ENCODE measurements at regions of chr7 and their contacts with region 1.

Region 1: GRCh38 chr7:27242555-27243339 is at the start of gene EVX1:
- DNase-seq: no peak
- H3K4me3 Mint-ChIP-seq: no peak within 1 kb of the TSS
- H3K27ac Mint-ChIP-seq: peak within 1 kb of the TSS; percentile 35
- H3K4me1 Mint-ChIP-seq: peaks cover 1% of the 10 kb centered on the region
- H3K27me3 Mint-ChIP-seq: peaks cover 75% of the 10 kb centered on the region
- total RNA-seq, gene EVX1: not detected in 2 replicates

Region 2: GRCh38 chr7:25851332-25852210 is 1391.2 kb before region 1 on chr7:
- intact Hi-C with region 1: loop called (anchors 5 kb)
- DNase-seq: peak; percentile 63
- H3K4me3 Mint-ChIP-seq: peak overlapping the region; percentile 78
- H3K27ac Mint-ChIP-seq: peak overlapping the region; percentile 74
- H3K4me1 Mint-ChIP-seq: peaks cover 21% of the 10 kb centered on the region
- H3K27me3 Mint-ChIP-seq: peaks cover 43% of the 10 kb centered on the region

Region 3: DNA sequence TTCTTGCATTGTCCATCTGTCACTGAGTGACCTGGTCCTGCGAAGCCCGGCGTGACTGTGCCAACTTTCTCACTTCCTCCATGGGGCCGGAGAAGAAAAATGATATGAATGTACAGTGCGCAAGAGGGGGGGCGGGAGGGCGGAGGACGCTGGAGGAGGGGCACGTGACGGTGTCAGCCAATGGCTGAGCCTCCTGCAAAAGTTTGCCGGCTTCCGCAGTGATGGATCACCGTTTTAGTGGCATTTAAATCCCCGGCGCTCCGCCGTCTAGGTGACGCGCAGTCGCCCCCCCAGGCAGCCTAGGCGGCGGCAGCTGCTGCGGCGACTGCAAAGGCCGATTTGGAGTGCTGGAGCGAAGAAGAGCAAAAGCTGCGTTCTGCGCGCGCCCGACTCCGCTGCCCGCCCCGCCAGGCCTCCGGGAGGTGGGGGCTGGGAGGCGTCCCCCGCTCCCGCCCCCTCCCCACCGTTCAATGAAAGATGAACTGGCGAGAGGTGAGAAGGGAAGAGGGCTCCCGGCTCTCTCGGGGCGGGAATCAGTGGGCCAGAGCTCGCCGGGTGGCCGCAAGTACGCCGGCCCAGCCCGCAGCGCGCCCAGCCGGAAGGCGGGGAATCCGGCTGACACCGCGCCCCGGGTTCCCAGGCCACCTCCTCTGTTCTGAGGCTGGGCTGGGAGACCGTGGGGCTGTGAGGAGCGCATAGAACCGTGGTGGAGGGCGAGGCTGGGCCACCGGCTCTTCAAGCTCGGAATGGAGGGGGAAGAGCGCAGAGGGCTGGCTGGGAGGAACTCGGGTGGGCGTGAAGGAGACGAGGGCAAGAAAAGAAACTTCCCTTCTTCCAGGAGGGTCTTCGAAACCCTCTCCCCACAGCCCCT is 146.6 kb before region 1 on chr7 and contains the start of gene HOXA1:
- intact Hi-C with region 1: loop called (anchors 5 kb)
- DNase-seq: peak; percentile 66
- H3K4me3 Mint-ChIP-seq: peak within 1 kb of the TSS; percentile 80
- H3K27ac Mint-ChIP-seq: peak within 1 kb of the TSS; percentile 21
- H3K4me1 Mint-ChIP-seq: peaks cover 16% of the 10 kb centered on the region
- H3K27me3 Mint-ChIP-seq: peaks cover 83% of the 10 kb centered on the region
- total RNA-seq, gene HOXA1: 0.11 and 0.16 TPM in 2 replicates

Region 4: GRCh38 chr7:27166531-27167505 is 75.9 kb before region 1 on chr7:
- intact Hi-C with region 1: loop called (anchors 2 kb)
- DNase-seq: no peak
- H3K4me3 Mint-ChIP-seq: no peak overlapping the region
- H3K27ac Mint-ChIP-seq: peak overlapping the region; percentile 49
- H3K4me1 Mint-ChIP-seq: peaks cover 3% of the 10 kb centered on the region
- H3K27me3 Mint-ChIP-seq: peaks cover 81% of the 10 kb centered on the region

Region 5: DNA sequence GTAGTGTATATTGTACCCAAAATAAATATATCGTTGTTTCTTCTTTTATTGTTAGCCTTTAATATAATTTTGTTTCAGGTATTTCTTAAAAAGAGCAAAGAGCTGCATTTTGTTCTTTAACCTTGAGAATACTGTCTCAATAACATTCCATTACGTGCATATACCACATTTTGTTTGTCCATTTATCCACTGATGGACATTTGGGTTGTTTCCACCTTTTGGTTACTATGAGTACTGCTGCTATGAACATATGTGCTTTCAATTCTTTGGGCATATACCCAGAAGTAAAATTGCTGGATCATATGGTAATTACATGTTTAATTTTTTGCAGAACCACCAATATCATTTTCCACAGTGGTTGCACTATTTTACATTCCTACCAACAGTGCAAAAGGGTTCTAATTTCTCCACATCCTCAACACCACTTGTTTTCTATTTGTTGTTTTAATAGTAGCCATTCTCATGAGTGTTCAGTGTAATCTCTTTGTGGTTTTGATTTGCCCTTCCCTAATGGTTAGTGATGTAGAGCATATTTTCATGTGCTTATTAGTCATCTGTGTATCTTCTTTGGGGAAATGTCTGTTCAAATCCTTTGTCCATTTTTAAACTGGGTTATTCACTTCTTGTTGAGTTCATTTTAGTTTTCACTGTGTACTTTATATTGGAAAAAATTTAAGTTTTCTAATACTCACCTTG is 317.9 kb after region 1 on chr7:
- intact Hi-C with region 1: no loop called
- DNase-seq: no peak
- H3K4me3 Mint-ChIP-seq: no peak overlapping the region
- H3K27ac Mint-ChIP-seq: no peak overlapping the region
- H3K4me1 Mint-ChIP-seq: no peaks in the 10 kb centered on the region
- H3K27me3 Mint-ChIP-seq: no peaks in the 10 kb centered on the region

Region 6: DNA sequence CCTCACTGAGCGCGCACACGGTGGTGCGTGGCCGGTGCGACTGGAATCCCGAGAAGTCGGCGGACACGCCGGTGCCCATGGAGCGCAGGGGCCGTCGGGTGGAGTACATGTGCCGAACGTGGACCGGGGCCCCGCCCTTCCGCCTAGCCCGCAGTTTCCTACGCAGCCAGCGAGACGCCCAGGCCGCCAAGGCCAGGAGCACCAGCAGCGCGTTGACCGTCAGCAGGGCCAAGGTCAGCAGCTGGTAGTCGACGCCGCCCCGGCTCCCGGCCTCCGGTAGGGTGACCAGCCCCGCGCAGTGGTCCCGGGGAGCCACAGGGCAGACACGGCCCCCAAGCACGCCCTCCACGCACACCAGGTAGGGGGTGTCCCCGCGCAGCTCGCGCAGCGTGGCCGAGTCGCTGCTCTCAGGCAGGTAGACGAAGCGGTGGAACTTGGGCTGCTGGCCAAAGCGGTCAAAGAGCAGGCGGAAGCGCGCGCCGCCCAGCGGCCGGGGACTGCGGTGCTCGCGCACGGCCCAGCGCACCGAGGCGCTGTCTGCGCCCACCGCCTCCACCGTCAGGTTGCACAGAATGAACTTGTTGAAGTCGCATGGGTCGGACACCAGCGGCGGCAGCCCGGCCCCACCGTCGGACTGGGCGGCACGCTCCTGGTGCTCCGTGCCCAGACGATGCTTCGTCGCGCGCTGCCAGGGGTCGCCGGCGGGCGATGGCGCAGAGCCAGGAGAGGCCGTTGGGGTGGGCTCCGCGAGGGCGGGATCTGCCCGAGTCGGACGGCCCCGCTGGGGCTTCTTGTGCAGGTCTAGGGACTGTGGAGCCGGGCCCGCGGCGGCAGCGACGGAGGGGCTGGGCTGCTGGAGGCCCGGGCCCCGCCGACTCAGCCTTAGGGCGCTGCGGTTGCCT is 1713.2 kb after region 1 on chr7:
- intact Hi-C with region 1: loop called (anchors 10 kb)
- DNase-seq: no peak
- H3K4me3 Mint-ChIP-seq: no peak overlapping the region
- H3K27ac Mint-ChIP-seq: no peak overlapping the region
- H3K4me1 Mint-ChIP-seq: peaks cover 3% of the 10 kb centered on the region
- H3K27me3 Mint-ChIP-seq: peaks cover 65% of the 10 kb centered on the region